ENCODE measurements at regions of chr19 and their contacts with region 1.

Region 1: DNA sequence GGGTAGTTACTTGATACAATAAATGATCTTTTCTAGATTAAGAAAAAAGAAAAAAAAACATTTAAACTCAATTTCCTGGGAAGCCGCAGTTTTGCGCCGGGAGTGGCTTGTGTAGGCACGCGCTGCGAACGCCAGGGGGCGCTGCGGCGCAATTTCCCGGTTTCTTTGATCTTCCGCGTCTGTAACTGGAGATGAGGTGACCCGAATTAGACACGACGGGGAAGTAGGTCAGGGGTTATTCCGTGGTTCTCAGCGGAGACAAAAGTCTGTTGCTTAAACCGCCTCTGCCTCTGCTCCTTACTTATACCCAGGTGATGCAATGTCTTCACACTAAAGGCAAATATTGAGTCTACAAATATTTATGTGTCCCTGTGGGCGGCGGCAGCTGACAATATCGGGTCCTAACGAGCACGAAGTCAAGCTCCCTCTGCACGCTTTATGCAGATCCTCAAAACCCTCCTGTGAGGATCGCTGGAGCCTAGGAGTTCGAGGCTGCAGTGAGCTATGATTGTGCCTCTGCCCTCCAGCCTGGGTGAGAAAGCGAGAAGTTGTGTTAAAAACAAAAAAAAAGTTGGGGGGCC is 15.2 kb downstream of the STXBP2 start:
- DNase-seq: peak; percentile 95
- ATAC-seq: peak; percentile 78
- H3K4me3 ChIP-seq: peak overlapping the region; percentile 23; the same call in 1 of the 2 replicates
- H3K27ac ChIP-seq: no peak overlapping the region
- H3K4me1 ChIP-seq: peaks cover 3% of the 10 kb centered on the region; the same call in 1 of the 2 replicates
- H3K27me3 ChIP-seq: no peaks in the 10 kb centered on the region
- CTCF ChIP-seq: peak; percentile 97

Region 2: GRCh38 chr19:7633698-7634097 is 18.5 kb before region 1 on chr19 and contains the start of gene PCP2:
- CTCF ChIA-PET with region 1: no interaction called
- POLR2A ChIA-PET with region 1: no interaction called
- intact Hi-C with region 1: no loop called
- DNase-seq: no peak
- ATAC-seq: no peak
- H3K4me3 ChIP-seq: no peak within 1 kb of the TSS
- H3K27ac ChIP-seq: no peak within 1 kb of the TSS
- H3K4me1 ChIP-seq: peaks cover 10% of the 10 kb centered on the region
- H3K27me3 ChIP-seq: no peaks in the 10 kb centered on the region
- CTCF ChIP-seq: no peak
- total RNA-seq, gene PCP2: not detected in 2 replicates

Region 3: GRCh38 chr19:7680606-7681339 is 28.6 kb after region 1 on chr19 and contains the start of gene TRAPPC5:
- CTCF ChIA-PET with region 1: interaction called, 5 read pairs
- POLR2A ChIA-PET with region 1: no interaction called
- intact Hi-C with region 1: loop called (anchors 1 kb)
- DNase-seq: peak; percentile 93
- ATAC-seq: peak; percentile 81
- H3K4me3 ChIP-seq: peak within 1 kb of the TSS; percentile 97
- H3K27ac ChIP-seq: peak within 1 kb of the TSS; percentile 23; the same call in 1 of the 2 replicates
- H3K4me1 ChIP-seq: peaks cover 25% of the 10 kb centered on the region; the same call in 1 of the 2 replicates
- H3K27me3 ChIP-seq: no peaks in the 10 kb centered on the region
- CTCF ChIP-seq: peak; percentile 95
- total RNA-seq, gene TRAPPC5: 317 and 376 TPM in 2 replicates